Caco-2 (cell line): ENCODE measurements at regions of chr5 and their contacts with region 1.

Region 1: DNA sequence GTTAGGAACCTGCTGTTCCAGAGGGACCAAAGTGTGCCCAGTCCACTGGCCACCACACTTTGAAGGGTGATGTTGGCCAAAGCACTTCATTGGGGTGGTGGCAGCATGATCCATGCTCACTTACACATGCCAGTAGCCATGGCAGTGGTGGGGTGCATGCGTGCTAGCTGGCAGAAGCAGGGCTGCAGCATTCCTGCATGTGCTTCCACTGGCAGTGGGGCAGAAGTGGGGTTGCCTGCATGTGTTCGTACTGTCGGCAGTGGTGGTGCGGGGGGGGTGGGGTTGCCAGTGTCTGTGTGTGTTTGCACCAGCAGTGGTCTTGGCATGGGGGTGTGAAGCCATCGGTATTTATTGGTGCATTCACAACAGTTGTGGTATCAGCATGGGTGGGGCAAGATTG is 260.3 kb upstream of the ANKH start:
- DNase-seq: no peak
- H3K4me3 ChIP-seq: no peak overlapping the region
- H3K4me3 Mint-ChIP-seq: no peak overlapping the region
- H3K27ac Mint-ChIP-seq: no peak overlapping the region
- H3K4me1 ChIP-seq: no peaks in the 10 kb centered on the region
- H3K4me1 Mint-ChIP-seq: no peaks in the 10 kb centered on the region
- H3K27me3 ChIP-seq: no peaks in the 10 kb centered on the region; the same call in 1 of the 2 replicates
- H3K27me3 Mint-ChIP-seq: peaks cover 17% of the 10 kb centered on the region
- CTCF ChIP-seq: no peak

Region 2: DNA sequence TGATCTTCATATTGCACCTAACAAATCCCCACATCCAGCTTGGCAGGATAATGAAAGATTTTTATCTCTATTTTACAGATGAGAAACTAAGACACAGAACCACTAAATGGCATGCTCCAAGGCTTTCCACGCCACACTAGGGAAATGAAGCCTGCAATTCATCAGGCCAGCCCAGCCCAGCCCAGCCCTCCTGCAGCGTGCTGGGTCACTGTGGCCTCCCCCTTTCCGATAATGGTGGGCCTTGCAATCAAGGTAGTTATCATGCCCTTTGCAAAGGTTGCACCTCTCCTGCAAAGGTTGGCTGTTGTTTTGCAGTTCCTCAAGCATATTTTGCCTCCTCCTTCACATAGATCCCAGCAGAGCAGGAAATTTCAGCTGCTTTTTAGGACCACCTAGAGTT is 1610.0 kb before region 1 on chr5:
- CTCF ChIA-PET with region 1: no interaction called
- POLR2A ChIA-PET with region 1: interaction called, 13 read pairs
- intact Hi-C with region 1: no loop called
- DNase-seq: no peak
- H3K4me3 ChIP-seq: no peak overlapping the region
- H3K4me3 Mint-ChIP-seq: no peak overlapping the region
- H3K27ac Mint-ChIP-seq: no peak overlapping the region
- H3K4me1 ChIP-seq: peaks cover 15% of the 10 kb centered on the region
- H3K4me1 Mint-ChIP-seq: peaks cover 8% of the 10 kb centered on the region
- H3K27me3 ChIP-seq: no peaks in the 10 kb centered on the region
- H3K27me3 Mint-ChIP-seq: no peaks in the 10 kb centered on the region
- CTCF ChIP-seq: no peak

Region 3: GRCh38 chr5:15499528-15500324 is 367.8 kb after region 1 on chr5 and contains the start of gene FBXL7:
- CTCF ChIA-PET with region 1: no interaction called
- POLR2A ChIA-PET with region 1: no interaction called
- intact Hi-C with region 1: no loop called
- DNase-seq: no peak
- H3K4me3 ChIP-seq: no peak within 1 kb of the TSS
- H3K4me3 Mint-ChIP-seq: no peak within 1 kb of the TSS
- H3K27ac Mint-ChIP-seq: no peak within 1 kb of the TSS
- H3K4me1 ChIP-seq: no peaks in the 10 kb centered on the region
- H3K4me1 Mint-ChIP-seq: no peaks in the 10 kb centered on the region
- H3K27me3 ChIP-seq: no peaks in the 10 kb centered on the region
- H3K27me3 Mint-ChIP-seq: peaks cover 12% of the 10 kb centered on the region
- CTCF ChIP-seq: no peak
- total RNA-seq, gene FBXL7: not detected in 2 replicates